ENCODE measurements at regions of chr15 and their contacts with region 1.

Region 1: GRCh38 chr15:40454904-40455391 is 14.2 kb downstream of the BAHD1 start:
- DNase-seq: no peak
- ATAC-seq: no peak
- H3K4me3 ChIP-seq: peak overlapping the region; percentile 16
- H3K4me3 Mint-ChIP-seq: peak overlapping the region; percentile 72 to 95 (median 86)
- H3K27ac ChIP-seq: peak overlapping the region; percentile 63
- H3K27ac Mint-ChIP-seq: peak overlapping the region; percentile 48 to 97 (median 93)
- H3K4me1 ChIP-seq: peaks cover 39 to 70% of the 10 kb centered on the region in 2 donors
- H3K4me1 Mint-ChIP-seq: peaks cover 64 to 81% (median 76%) of the 10 kb centered on the region in 7 donors
- H3K27me3 ChIP-seq: no peaks in the 10 kb centered on the region
- H3K27me3 Mint-ChIP-seq: no peaks in the 10 kb centered on the region

Region 2: DNA sequence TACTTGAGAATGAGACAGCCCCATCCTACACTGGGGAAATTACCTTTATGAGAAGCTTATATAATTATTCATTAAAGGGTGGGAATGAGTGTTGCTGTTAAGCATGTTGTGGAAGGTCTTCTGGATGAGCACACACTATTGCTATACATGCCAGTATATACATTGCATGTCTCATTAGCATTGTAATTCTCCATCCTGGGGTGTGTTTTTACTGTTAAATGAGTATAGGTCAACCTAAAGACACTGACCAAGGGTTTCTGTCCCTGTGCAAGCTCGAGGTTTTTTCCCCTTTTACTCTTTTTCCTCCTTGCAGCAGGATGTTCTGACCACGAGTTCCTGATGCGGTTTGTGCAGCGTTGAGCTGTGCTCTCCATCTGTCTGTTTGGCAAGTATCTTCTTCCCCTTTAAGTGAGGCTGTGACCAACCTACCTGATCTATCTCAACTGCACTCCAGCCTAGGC is 56.5 kb before region 1 on chr15:
- CTCF ChIA-PET with region 1: no interaction called
- POLR2A ChIA-PET with region 1: no interaction called
- intact Hi-C with region 1: no loop called
- DNase-seq: no peak
- ATAC-seq: peak; percentile 89
- H3K4me3 ChIP-seq: no peak overlapping the region
- H3K4me3 Mint-ChIP-seq: peak overlapping the region; percentile 27 to 81 (median 58)
- H3K27ac ChIP-seq: no peak overlapping the region
- H3K27ac Mint-ChIP-seq: peak overlapping the region in 3 of 9 donors; percentile 25 to 65 (median 35)
- H3K4me1 ChIP-seq: peaks cover 8% of the 10 kb centered on the region in 2 donors
- H3K4me1 Mint-ChIP-seq: peaks cover 15 to 26% (median 20%) of the 10 kb centered on the region in 7 donors
- H3K27me3 ChIP-seq: no peaks in the 10 kb centered on the region
- H3K27me3 Mint-ChIP-seq: no peaks in the 10 kb centered on the region

Region 3: GRCh38 chr15:40421246-40422157 is 33.4 kb before region 1 on chr15:
- CTCF ChIA-PET with region 1: no interaction called
- POLR2A ChIA-PET with region 1: no interaction called
- intact Hi-C with region 1: no loop called
- DNase-seq: peak; percentile 59 to 84 (median 73)
- ATAC-seq: peak; percentile 97
- H3K4me3 ChIP-seq: peak overlapping the region; percentile 19
- H3K4me3 Mint-ChIP-seq: peak overlapping the region in 1 of 10 donors; percentile 4
- H3K27ac ChIP-seq: no peak overlapping the region
- H3K27ac Mint-ChIP-seq: peak overlapping the region in 1 of 9 donors; percentile 32
- H3K4me1 ChIP-seq: peaks cover 0 to 3% of the 10 kb centered on the region in 2 donors
- H3K4me1 Mint-ChIP-seq: peaks cover 0 to 7% (median 0%) of the 10 kb centered on the region in 7 donors
- H3K27me3 ChIP-seq: no peaks in the 10 kb centered on the region
- H3K27me3 Mint-ChIP-seq: no peaks in the 10 kb centered on the region

Region 4: GRCh38 chr15:40470423-40471104 is 15.6 kb after region 1 on chr15 and contains the start of gene CHST14:
- CTCF ChIA-PET with region 1: interaction called, 3 read pairs
- POLR2A ChIA-PET with region 1: interaction called, 7 read pairs
- intact Hi-C with region 1: loop called (anchors 1 to 2 kb)
- DNase-seq: peak; percentile 24 to 68 (median 53)
- ATAC-seq: peak; percentile 88
- H3K4me3 ChIP-seq: peak within 1 kb of the TSS; percentile 89
- H3K4me3 Mint-ChIP-seq: peak within 1 kb of the TSS; percentile 90 to 96 (median 92)
- H3K27ac ChIP-seq: peak within 1 kb of the TSS; percentile 81
- H3K27ac Mint-ChIP-seq: peak within 1 kb of the TSS; percentile 80 to 95 (median 87)
- H3K4me1 ChIP-seq: peaks cover 8 to 16% of the 10 kb centered on the region in 2 donors
- H3K4me1 Mint-ChIP-seq: peaks cover 15 to 47% (median 37%) of the 10 kb centered on the region in 7 donors
- H3K27me3 ChIP-seq: no peaks in the 10 kb centered on the region
- H3K27me3 Mint-ChIP-seq: peaks cover 0 to 3% (median 0%) of the 10 kb centered on the region in 5 donors
- total RNA-seq, gene CHST14: 7.3 to 12.5 (median 10.8) TPM

Region 5: DNA sequence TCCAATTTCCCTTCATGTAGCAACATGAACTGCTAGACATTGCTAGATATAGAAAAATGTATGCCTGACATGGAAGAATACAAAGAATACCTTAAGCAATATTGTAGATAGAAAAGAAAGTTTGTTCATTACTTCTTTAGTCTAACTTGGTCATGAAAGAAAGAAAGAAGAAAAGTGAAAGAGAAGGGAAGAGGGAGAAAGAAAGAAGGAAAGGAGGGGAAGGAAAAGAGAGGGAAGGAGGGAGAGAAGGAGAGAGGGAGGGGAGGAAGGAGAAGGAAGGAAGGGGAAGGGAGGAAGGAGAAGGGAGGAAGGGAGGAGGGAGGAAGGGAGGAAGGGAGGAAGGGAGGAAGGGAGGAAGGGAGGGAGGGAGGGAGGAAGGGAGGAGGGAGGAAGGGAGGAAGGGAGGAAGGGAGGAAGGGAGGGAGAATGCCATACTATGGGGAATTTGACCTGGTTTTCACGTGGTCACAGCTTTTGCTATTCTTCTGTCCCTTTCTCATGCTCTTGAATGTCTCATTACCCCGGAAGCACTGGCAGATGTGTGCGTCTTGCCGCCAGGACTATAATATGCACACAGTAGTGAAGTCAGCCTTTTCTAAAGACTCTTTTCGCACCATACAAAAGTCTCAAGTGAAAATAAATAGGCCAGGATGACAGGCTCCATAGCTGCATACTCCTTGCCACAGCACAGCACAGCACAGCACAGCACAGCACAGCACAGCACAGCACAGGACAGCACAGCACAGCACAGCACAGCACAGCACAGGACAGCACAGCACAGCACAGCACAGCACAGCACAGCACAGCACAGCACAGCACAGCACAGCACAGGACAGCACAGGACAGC is 576.5 kb after region 1 on chr15:
- CTCF ChIA-PET with region 1: no interaction called
- POLR2A ChIA-PET with region 1: no interaction called
- intact Hi-C with region 1: no loop called
- DNase-seq: no peak
- ATAC-seq: no peak
- H3K4me3 ChIP-seq: no peak overlapping the region
- H3K4me3 Mint-ChIP-seq: no peak overlapping the region
- H3K27ac ChIP-seq: no peak overlapping the region
- H3K27ac Mint-ChIP-seq: peak overlapping the region in 6 of 9 donors; percentile 14 to 65 (median 49)
- H3K4me1 ChIP-seq: no peaks in the 10 kb centered on the region
- H3K4me1 Mint-ChIP-seq: peaks cover 2 to 27% (median 16%) of the 10 kb centered on the region in 7 donors
- H3K27me3 ChIP-seq: no peaks in the 10 kb centered on the region
- H3K27me3 Mint-ChIP-seq: no peaks in the 10 kb centered on the region